ENCODE measurements at regions of chr5 and their contacts with region 1.

Region 1: GRCh38 chr5:88732181-88732633 is 150.8 kb downstream of the MEF2C start:
- DNase-seq: peak; percentile 71 to 82 (median 78)
- H3K4me3 ChIP-seq: peak overlapping the region in 1 of 3 experiments; percentile 19
- H3K4me3 Mint-ChIP-seq: peak overlapping the region; percentile 51 to 69
- H3K27ac ChIP-seq: peak overlapping the region in 1 of 2 donors; percentile 73
- H3K27ac Mint-ChIP-seq: peak overlapping the region; percentile 80 to 94 (median 90)
- H3K4me1 ChIP-seq: peaks cover 29 to 38% of the 10 kb centered on the region in 2 donors
- H3K4me1 Mint-ChIP-seq: peaks cover 35% of the 10 kb centered on the region
- H3K27me3 ChIP-seq: no peaks in the 10 kb centered on the region
- H3K27me3 Mint-ChIP-seq: no peaks in the 10 kb centered on the region
- CTCF ChIP-seq: no peak

Region 2: DNA sequence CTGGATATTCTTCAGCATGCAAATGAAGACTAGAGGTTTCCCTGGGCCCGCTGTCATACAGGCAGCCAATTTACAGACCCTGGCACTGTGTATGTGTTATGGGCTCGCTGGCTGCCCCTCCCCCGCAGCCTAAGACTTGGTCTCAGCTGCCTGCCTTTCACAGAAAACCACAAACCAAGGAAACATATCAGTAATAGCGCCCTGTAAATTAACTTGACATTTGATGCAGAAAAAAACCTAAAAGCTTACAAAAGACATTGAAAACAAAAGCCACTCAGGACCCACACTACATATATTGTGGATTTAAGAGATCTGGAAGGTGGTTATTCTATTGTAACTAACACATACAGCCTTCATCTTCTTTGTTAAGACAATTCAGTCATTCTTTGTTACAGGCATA is 176.5 kb before region 1 on chr5:
- intact Hi-C with region 1: no loop called
- DNase-seq: no peak
- H3K4me3 ChIP-seq: no peak overlapping the region
- H3K4me3 Mint-ChIP-seq: no peak overlapping the region
- H3K27ac ChIP-seq: no peak overlapping the region
- H3K27ac Mint-ChIP-seq: no peak overlapping the region
- H3K4me1 ChIP-seq: no peaks in the 10 kb centered on the region
- H3K4me1 Mint-ChIP-seq: no peaks in the 10 kb centered on the region
- H3K27me3 ChIP-seq: no peaks in the 10 kb centered on the region
- H3K27me3 Mint-ChIP-seq: peaks cover 0 to 2% (median 0%) of the 10 kb centered on the region in 3 donors
- CTCF ChIP-seq: no peak

Region 3: DNA sequence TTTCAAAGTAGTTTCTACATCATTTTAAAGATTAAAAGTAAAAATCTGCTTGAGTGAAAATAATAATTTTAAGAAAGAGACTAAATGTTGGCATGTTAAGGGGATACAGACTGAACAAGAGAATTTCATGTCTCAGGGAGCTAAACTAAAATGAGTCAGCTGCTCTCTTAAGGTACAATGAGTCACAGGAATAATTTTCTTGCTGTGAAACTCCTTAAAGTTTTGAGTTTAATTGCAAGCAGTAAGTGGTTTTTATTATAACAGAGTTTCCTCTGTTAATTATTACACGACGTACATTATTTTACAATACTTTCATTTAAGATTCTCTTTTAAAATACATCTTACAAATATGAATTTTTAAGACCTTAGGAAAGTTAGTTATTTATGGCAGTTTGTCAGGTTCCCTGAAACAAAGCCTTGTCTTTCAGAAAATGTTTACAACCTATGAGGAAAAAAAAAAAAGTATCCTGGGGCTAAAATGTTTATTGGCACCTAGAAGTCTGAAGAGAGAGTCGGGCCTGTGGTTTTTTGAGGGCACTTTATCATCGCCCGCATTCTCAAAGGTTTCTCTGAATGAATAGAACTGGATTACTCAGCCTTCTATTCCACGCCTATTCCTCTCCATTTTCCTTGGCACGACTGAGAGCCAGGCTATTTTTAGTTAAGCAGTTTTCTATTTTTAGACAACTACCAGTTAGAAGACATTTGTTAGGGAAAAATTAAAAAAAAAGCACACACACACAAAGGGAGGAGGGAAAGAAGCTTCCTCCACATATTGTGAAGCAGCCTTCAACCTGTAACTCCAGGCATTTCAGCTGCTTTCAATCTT is 53.4 kb after region 1 on chr5:
- intact Hi-C with region 1: loop called in 1 of 2 experiments (anchors 10 kb)
- DNase-seq: peak; percentile 54 to 85 (median 82)
- H3K4me3 ChIP-seq: no peak overlapping the region
- H3K4me3 Mint-ChIP-seq: peak overlapping the region; percentile 27 to 30
- H3K27ac ChIP-seq: peak overlapping the region in 1 of 2 donors; percentile 68
- H3K27ac Mint-ChIP-seq: peak overlapping the region; percentile 81 to 96 (median 90)
- H3K4me1 ChIP-seq: peaks cover 33 to 35% of the 10 kb centered on the region in 2 donors
- H3K4me1 Mint-ChIP-seq: peaks cover 40% of the 10 kb centered on the region
- H3K27me3 ChIP-seq: no peaks in the 10 kb centered on the region
- H3K27me3 Mint-ChIP-seq: no peaks in the 10 kb centered on the region
- CTCF ChIP-seq: no peak

Region 4: DNA sequence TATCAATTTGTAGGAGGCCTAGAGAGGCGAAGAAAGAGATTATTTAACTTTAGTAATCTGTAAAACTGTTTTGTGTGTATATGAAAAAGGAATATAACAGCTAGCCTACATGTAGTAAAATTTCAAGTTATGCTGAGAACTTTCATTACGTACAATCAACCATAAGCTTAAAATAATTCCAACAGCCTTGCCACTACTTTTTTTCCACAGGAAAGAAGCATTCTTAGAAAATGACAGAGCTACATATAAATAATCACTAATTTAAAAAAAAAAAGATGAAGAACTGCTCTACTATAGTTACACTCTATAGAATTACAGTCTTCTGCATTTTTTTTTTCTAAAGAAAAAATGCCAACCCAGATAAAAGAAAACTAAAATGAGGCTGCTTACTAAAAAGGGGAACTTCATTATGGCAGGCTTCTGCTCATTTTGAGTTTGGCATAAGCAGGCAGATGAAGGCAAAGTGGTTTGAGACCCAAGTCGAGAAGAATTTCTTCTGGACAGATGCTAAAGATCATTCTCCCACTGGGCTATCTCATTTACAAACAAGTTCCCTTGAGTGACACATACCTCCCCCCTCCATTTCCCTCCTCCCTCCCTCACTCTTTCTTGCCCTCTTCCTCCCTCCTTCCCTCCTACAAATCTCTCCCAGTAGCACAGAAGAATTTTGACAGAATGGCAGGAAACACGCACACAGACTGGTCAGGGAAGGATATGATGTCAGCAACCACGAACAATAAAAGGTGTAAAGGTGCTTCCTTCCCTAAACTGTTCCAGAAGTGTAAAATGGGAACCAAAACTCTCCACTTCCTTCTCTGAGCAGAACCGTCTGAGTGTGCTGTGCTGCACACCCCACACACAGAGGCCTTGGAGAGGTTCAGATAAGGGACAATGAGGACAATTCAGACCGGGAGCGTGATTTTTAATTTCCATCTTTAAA is 94.7 kb after region 1 on chr5:
- intact Hi-C with region 1: loop called in 1 of 2 experiments (anchors 10 kb)
- DNase-seq: peak; percentile 76 to 95 (median 94)
- H3K4me3 ChIP-seq: peak overlapping the region; percentile 5 to 65 (median 34)
- H3K4me3 Mint-ChIP-seq: peak overlapping the region; percentile 65 to 72
- H3K27ac ChIP-seq: peak overlapping the region; percentile 66 to 87
- H3K27ac Mint-ChIP-seq: peak overlapping the region; percentile 92 to 99 (median 98)
- H3K4me1 ChIP-seq: peaks cover 66 to 85% of the 10 kb centered on the region in 2 donors
- H3K4me1 Mint-ChIP-seq: peaks cover 76% of the 10 kb centered on the region
- H3K27me3 ChIP-seq: no peaks in the 10 kb centered on the region
- H3K27me3 Mint-ChIP-seq: no peaks in the 10 kb centered on the region
- CTCF ChIP-seq: no peak

Region 5: GRCh38 chr5:90264689-90265544 is 1532.7 kb after region 1 on chr5:
- intact Hi-C with region 1: loop called (anchors 2 kb)
- DNase-seq: peak; percentile 48 to 51 (median 48)
- H3K4me3 ChIP-seq: no peak overlapping the region
- H3K4me3 Mint-ChIP-seq: no peak overlapping the region
- H3K27ac ChIP-seq: no peak overlapping the region
- H3K27ac Mint-ChIP-seq: no peak overlapping the region
- H3K4me1 ChIP-seq: no peaks in the 10 kb centered on the region
- H3K4me1 Mint-ChIP-seq: peaks cover 3% of the 10 kb centered on the region
- H3K27me3 ChIP-seq: no peaks in the 10 kb centered on the region
- H3K27me3 Mint-ChIP-seq: peaks cover 0 to 3% (median 0%) of the 10 kb centered on the region in 3 donors
- CTCF ChIP-seq: peak; percentile 87

Measured in CD14-positive monocyte (primary cell).